ENCODE measurements at regions of chr5 and their contacts with region 1.

Region 1: GRCh38 chr5:135191084-135191826 is 157.2 kb upstream of the PITX1 start:
- DNase-seq: peak; percentile 87
- H3K4me3 ChIP-seq: peak overlapping the region; percentile 61
- H3K27ac ChIP-seq: no peak overlapping the region
- H3K4me1 ChIP-seq: peaks cover 8% of the 10 kb centered on the region
- CTCF ChIP-seq: peak; percentile 90

Region 2: DNA sequence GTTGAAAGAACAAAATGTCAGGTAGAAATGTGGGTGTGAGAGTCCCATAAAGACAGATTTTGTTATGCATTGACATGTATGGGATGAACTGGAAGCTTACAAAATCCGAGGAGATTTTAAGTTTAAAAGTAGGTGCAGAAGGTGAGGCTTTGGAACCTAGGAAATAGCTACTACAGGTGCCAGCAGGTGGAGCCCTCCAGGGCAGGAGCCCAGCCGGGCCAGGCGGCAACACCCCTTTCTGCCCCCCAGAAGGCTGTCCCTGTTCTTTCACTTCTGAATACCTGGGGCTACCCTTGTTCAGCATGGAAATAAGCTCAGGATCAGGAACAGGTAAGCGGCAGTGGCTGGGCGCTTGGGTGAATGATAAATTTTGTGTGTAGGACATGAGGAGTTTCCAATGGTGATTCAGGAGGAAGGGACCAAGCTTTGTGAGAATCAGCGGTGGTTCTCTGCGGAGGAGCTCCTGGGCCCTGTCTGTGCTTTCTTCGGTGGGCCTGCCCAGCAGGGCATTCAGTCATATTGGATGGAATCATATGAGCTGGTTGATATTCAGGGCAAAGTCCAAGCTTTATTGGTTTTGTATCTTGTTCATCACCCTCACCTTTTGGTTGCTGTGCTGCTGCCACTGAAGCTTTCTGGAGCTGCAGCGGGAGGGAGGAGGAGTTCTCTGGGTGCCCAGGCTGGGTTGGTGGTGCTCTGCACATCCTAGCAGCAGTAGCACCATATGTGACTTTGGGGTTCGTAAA is 274.0 kb before region 1 on chr5:
- CTCF ChIA-PET with region 1: interaction called, 5 read pairs
- POLR2A ChIA-PET with region 1: interaction called, 4 read pairs
- intact Hi-C with region 1: loop called (anchors 1 kb)
- DNase-seq: peak; percentile 44
- H3K4me3 ChIP-seq: no peak overlapping the region
- H3K27ac ChIP-seq: no peak overlapping the region
- H3K4me1 ChIP-seq: no peaks in the 10 kb centered on the region
- CTCF ChIP-seq: peak; percentile 87

Region 3: DNA sequence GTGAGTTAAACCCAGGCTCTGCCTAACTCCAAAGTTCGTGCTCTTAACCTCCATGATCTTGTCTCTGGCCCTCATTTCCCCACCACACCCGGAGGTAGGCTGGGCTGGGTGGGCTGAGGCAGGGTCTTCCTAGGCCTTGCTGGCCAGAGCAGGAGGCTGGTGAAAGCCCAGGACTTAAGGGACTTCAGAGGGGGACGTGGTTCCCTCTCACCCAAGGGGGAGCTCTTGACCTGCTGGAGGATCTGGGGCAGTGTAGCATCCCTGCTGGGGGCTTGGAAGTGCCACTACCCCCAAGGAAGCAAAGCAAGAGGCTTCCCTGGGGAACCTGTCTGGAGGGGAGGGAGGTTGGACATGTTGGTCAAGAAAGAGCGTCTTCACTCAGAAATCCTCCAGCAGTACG is 171.9 kb before region 1 on chr5:
- CTCF ChIA-PET with region 1: no interaction called
- POLR2A ChIA-PET with region 1: no interaction called
- intact Hi-C with region 1: loop called (anchors 1 kb)
- DNase-seq: peak; percentile 45
- H3K4me3 ChIP-seq: no peak overlapping the region
- H3K27ac ChIP-seq: no peak overlapping the region
- H3K4me1 ChIP-seq: no peaks in the 10 kb centered on the region
- CTCF ChIP-seq: peak; percentile 74

Region 4: GRCh38 chr5:135034236-135034962 is 156.9 kb before region 1 on chr5:
- CTCF ChIA-PET with region 1: interaction called, 8 read pairs
- POLR2A ChIA-PET with region 1: no interaction called
- intact Hi-C with region 1: loop called (anchors 2 kb)
- DNase-seq: peak; percentile 90
- H3K4me3 ChIP-seq: peak overlapping the region; percentile 84
- H3K27ac ChIP-seq: peak overlapping the region; percentile 80
- H3K4me1 ChIP-seq: peaks cover 50% of the 10 kb centered on the region
- CTCF ChIP-seq: no peak

Region 5: GRCh38 chr5:135053278-135053677 is 138.0 kb before region 1 on chr5:
- CTCF ChIA-PET with region 1: interaction called, 6 read pairs
- POLR2A ChIA-PET with region 1: interaction called, 3 read pairs
- intact Hi-C with region 1: loop called (anchors 1 kb)
- DNase-seq: peak; percentile 98
- H3K4me3 ChIP-seq: peak overlapping the region; percentile 61
- H3K27ac ChIP-seq: peak overlapping the region; percentile 97
- H3K4me1 ChIP-seq: peaks cover 98% of the 10 kb centered on the region
- CTCF ChIP-seq: no peak

Region 6: DNA sequence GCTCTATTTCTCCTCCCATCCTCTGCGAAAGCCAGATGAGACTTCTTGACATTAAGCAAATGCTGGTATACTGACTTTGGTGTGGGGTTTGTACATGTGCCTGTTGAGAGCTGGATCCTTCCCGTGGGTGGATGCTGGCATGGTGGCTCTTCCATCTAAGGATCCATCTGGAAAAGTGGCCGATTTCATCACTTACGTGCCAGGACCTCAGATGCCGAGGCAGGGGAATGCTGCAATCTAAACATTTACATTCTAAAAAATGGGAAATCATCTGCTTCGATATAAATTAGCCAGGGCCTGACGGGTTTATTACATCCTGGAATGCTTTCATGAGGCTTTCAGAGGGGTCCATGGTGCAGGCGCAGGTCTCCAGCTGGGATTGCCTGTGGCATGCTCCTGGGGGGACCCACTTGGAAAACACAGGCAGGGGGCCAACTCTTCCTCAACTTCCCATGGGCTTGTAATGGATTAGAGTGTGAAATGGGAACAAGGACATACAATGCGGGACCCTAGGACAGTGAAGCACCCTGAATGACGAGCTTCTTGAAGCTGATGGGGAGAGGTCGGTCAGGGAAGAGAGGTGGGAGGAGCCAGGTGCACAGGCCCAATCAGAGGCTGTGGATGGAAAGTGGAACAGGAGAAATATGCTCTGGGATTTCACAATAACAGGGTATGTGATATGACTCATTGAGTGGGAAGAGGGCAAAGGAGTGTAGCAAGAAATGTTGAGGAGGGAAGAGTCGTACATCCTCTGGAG is 51.7 kb before region 1 on chr5:
- CTCF ChIA-PET with region 1: no interaction called
- POLR2A ChIA-PET with region 1: no interaction called
- intact Hi-C with region 1: no loop called
- DNase-seq: no peak
- H3K4me3 ChIP-seq: no peak overlapping the region
- H3K27ac ChIP-seq: no peak overlapping the region
- H3K4me1 ChIP-seq: peaks cover 18% of the 10 kb centered on the region
- CTCF ChIP-seq: no peak

Measured in OCI-LY7 (cell line).